RWPE1 (cell line): ENCODE measurements at regions of chr11 and their contacts with region 1.

Region 1: GRCh38 chr11:63945477-63946163 is 6.8 kb downstream of the NAA40 start:
- DNase-seq: peak; percentile 81
- H3K27ac ChIP-seq: peak overlapping the region; percentile 64
- CTCF ChIP-seq: peak; percentile 77

Region 2: GRCh38 chr11:63831326-63831725 is 114.3 kb before region 1 on chr11:
- CTCF ChIA-PET with region 1: interaction called, 48 read pairs
- POLR2A ChIA-PET with region 1: no interaction called
- DNase-seq: no peak
- H3K27ac ChIP-seq: no peak overlapping the region
- CTCF ChIP-seq: no peak

Region 3: GRCh38 chr11:63838678-63839507 is 106.7 kb before region 1 on chr11 and contains the start of gene MARK2:
- CTCF ChIA-PET with region 1: interaction called, 48 read pairs
- POLR2A ChIA-PET with region 1: interaction called, 3 read pairs
- DNase-seq: peak; percentile 99
- H3K27ac ChIP-seq: peak within 1 kb of the TSS; percentile 88
- CTCF ChIP-seq: no peak